ENCODE measurements at regions of chr2 and their contacts with region 1.

Region 1: DNA sequence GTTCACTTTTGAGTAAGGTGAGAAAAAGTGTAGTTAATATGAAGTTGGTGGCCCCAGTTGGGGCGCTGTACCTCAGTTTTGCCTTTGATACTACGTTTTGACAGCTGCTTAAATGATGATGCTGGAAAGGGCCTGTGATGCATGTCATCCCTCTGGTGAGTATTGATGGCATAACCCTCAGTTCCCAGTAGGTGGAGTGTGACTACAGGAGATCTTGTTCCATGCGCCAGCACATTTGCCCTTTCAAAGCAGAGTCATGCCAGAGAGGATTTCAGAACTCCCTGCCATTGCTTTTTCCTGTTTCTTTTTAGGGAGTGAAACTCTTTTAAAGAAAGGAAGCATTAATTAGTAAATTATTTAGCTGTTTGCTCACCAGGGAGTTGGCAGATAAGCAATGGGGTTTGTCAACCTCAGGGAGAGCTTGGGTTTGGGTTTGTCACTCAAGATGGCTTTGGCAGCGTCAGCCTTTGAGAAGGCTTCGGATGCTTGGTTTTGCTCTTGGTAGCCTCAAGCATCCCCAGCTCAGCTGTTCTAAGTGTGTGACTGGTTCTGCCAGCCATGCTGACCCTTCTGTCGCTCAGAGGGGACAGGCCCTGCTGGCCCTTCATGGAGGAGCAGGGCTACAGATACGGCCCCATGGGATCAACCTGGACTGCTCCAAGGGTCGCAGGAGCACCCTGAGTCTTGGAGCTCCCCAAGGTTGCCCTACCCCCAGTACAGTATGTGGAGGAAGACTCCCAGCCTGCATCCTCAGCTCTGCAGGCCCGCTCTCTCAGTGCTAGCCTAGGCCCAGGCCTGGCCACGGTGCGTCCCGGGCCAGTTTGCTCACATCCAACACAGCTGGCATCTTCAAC is 29.1 kb downstream of the ARMC9 start:
- DNase-seq: peak in 4 of 5 donors; percentile 45 to 68 (median 57)
- ATAC-seq: peak; percentile 77 to 97 (median 94)
- H3K4me3 ChIP-seq: no peak overlapping the region
- H3K27ac ChIP-seq: peak overlapping the region in 3 of 12 donors; percentile 36 to 76 (median 53)
- H3K4me1 ChIP-seq: peaks cover 0 to 6% (median 0%) of the 10 kb centered on the region in 12 donors
- H3K27me3 ChIP-seq: no peaks in the 10 kb centered on the region
- CTCF ChIP-seq: peak; percentile 61 to 82 (median 76)
- POLR2A ChIP-seq: no peak

Region 2: DNA sequence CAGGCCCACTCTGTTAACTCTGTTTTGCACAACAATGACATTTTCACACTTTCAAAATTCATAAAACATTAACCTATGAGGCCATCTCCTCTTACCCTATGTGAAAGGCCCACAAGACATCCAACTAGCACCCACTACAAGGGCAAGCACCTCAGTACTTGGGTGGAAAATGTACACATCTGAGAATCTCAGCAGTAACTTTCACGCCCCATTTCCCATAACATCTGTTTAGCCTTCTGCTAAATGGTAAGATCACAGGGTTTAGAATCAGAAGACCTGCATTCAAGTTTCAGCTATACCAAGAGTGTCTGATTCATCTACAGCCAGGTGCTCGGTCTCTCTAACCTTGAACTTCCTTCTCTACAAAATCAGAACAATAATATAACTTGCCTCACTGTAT is 722.4 kb before region 1 on chr2:
- intact Hi-C with region 1: no loop called
- DNase-seq: no peak
- ATAC-seq: no peak
- H3K4me3 ChIP-seq: no peak overlapping the region
- H3K27ac ChIP-seq: no peak overlapping the region
- H3K4me1 ChIP-seq: no peaks in the 10 kb centered on the region
- H3K27me3 ChIP-seq: no peaks in the 10 kb centered on the region
- CTCF ChIP-seq: no peak
- POLR2A ChIP-seq: no peak

Region 3: GRCh38 chr2:231399853-231400680 is 172.5 kb after region 1 on chr2:
- intact Hi-C with region 1: loop called in 1 of 10 experiments (anchors 2 kb)
- DNase-seq: peak in 4 of 5 donors; percentile 47 to 81 (median 62)
- ATAC-seq: peak; percentile 87 to 92 (median 89)
- H3K4me3 ChIP-seq: peak overlapping the region in 1 of 12 donors; percentile 4
- H3K27ac ChIP-seq: peak overlapping the region in 11 of 12 donors; percentile 2 to 83 (median 54)
- H3K4me1 ChIP-seq: peaks cover 0 to 41% (median 14%) of the 10 kb centered on the region in 12 donors
- H3K27me3 ChIP-seq: peaks cover 0 to 16% (median 3%) of the 10 kb centered on the region in 9 donors
- CTCF ChIP-seq: peak in 7 of 12 donors; percentile 10 to 42 (median 30)
- POLR2A ChIP-seq: no peak

Region 4: DNA sequence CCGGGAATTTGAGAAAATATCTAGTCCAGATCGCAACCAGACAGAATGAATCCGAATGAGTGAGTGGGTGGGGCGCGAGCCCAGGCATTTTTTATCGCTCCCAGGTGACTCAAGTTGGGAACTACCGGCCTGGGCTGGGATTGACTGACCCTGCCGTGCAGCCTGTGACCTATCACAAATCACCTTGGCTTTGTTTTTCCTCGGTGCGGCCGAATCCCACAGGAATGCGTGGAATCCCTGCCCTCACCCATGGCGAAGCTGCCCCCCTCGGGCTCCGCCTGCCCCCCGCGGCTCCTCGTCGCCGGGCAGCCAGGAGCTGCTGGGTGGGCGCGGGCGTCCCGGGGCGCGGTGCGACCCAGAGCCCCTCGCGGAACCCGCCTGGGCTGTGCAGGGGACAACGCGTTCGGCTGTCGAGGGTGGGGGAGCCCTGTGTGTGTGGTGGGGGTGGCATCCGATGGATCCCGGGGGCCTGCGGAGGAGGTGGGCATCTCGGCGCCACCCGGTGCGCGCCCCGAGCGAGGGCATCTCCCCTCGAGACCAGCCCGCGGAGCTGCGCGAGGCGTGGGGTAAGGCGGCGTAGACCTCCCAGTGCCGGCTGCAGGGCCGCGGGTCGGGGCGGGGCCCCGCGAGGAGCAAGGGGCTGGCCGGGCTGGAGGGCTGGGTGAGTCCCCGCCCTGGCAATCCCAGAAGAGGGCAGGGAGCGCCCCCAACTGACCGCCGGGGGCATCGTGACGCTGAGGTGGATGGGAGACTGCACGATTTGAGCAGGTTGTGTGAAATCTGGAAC is 184.5 kb after region 1 on chr2:
- intact Hi-C with region 1: loop called (anchors 1 to 5 kb)
- DNase-seq: peak; percentile 78 to 91 (median 85)
- ATAC-seq: peak; percentile 81 to 100 (median 99)
- H3K4me3 ChIP-seq: peak overlapping the region; percentile 29 to 79 (median 64)
- H3K27ac ChIP-seq: peak overlapping the region in 2 of 12 donors; percentile 10 to 33
- H3K4me1 ChIP-seq: peaks cover 0 to 16% (median 9%) of the 10 kb centered on the region in 12 donors
- H3K27me3 ChIP-seq: peaks cover 0 to 14% (median 4%) of the 10 kb centered on the region in 9 donors
- CTCF ChIP-seq: peak; percentile 67 to 96 (median 86)
- POLR2A ChIP-seq: no peak

Region 5: DNA sequence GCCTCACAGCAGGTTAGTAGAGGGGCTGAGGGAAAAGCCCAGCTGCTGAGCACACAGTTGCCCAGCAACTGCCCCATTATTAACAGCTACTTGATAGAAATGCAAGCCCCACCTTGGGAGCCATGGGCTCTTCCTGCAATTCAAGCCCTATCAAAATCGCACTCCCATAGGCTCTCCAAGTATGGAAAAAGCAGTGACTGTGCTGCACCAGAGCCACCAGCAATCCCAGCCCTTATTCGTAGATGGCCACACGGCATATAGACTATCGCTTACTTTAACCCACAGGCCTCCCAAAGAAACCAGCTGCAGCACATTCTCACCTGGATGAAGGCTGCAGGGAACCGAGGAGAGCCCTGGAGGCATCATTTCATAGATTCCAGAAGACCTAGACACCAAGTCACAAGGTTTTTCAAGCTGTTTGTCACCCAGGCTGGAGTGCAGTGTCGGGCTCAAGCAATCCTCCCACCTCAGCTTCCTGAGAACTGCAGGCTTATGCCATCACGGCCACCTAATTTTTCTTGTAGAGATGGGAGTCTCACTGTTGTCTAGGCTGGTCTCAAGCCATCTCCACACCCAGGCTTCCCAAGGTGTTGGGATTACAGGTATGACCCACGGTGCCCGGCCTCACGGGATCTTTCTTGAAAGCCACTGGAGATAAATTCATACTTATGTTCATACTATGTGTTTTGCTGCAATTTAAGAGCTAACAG is 225.4 kb after region 1 on chr2:
- intact Hi-C with region 1: loop called in 7 of 10 experiments (anchors 1 to 5 kb)
- DNase-seq: no peak
- ATAC-seq: peak in 3 of 4 donors; percentile 5 to 15 (median 13)
- H3K4me3 ChIP-seq: no peak overlapping the region
- H3K27ac ChIP-seq: peak overlapping the region in 1 of 12 donors; percentile 12
- H3K4me1 ChIP-seq: peaks cover 0 to 6% (median 0%) of the 10 kb centered on the region in 12 donors
- H3K27me3 ChIP-seq: no peaks in the 10 kb centered on the region
- CTCF ChIP-seq: no peak
- POLR2A ChIP-seq: no peak